ENCODE measurements at regions of chr16 and their contacts with region 1.

Region 1: GRCh38 chr16:57091975-57092785 is at the start of gene CPNE2:
- DNase-seq: peak; percentile 88
- H3K4me3 ChIP-seq: peak within 1 kb of the TSS; percentile 71 to 93 (median 85)
- H3K27ac ChIP-seq: peak within 1 kb of the TSS; percentile 80 to 86 (median 82)
- H3K4me1 ChIP-seq: peaks cover 0 to 28% (median 23%) of the 10 kb centered on the region in 4 donors
- H3K27me3 ChIP-seq: no peaks in the 10 kb centered on the region
- CTCF ChIP-seq: no peak
- EP300 ChIP-seq: no peak
- POLR2A ChIP-seq: no peak
- total RNA-seq, gene CPNE2: 22.9 to 59.9 (median 25.4) TPM

Region 2: GRCh38 chr16:57000271-57001025 is 91.7 kb before region 1 on chr16:
- intact Hi-C with region 1: no loop called
- DNase-seq: peak; percentile 14
- H3K4me3 ChIP-seq: no peak overlapping the region
- H3K27ac ChIP-seq: peak overlapping the region in 3 of 4 donors; percentile 16 to 66 (median 51)
- H3K4me1 ChIP-seq: peaks cover 0 to 14% (median 6%) of the 10 kb centered on the region in 4 donors
- H3K27me3 ChIP-seq: no peaks in the 10 kb centered on the region
- CTCF ChIP-seq: no peak
- EP300 ChIP-seq: no peak
- POLR2A ChIP-seq: no peak

Region 3: DNA sequence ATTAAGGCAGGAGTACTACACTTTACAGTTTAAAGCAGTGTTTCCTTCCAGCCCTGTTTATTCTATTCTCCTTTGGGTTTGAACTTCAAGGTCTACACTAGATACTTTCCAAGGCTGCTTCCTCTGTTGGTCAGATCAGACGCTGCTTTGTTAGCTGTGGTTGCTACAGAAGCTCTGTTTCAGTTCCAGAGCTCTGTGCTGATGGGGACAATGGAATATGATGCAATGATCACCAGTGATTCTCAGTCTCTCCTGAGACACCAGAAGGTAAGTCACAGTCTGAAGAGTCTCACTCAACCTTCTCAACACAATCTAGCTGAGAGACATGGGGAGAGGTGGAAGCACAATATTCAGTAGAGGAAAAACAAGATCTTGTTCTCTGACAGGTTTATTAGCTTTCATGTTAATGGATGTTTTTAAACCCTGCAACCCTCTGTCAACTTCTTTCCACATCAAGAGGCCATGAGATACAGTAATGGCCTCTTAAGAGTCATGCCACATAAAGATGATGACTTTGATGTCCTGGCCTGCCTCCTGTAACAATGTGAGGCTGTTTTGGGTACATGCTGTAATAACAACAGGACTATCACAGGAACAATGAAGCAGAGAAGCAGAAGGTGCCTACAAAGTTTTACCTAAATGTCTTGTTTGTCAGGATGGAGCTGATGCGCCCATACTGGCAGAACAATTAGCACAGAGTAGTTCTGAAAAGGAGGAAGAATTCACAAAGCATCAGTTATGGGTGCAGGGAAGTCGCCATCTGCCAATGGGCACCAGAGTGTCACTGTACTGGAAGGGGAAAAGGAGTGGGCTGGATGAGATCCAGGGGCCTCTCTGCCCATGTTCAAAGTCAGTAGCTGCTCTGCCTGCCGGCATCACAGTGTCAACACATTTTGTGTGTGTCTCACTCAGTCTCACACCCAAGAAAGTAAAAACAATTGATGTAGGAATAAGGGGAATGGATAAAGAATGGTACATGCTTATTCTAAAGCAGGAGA is 60.2 kb after region 1 on chr16:
- intact Hi-C with region 1: loop called (anchors 5 kb)
- DNase-seq: peak; percentile 41
- H3K4me3 ChIP-seq: no peak overlapping the region
- H3K27ac ChIP-seq: peak overlapping the region in 1 of 4 donors; percentile 54
- H3K4me1 ChIP-seq: peaks cover 0 to 26% (median 20%) of the 10 kb centered on the region in 4 donors
- H3K27me3 ChIP-seq: no peaks in the 10 kb centered on the region
- CTCF ChIP-seq: no peak
- EP300 ChIP-seq: no peak
- POLR2A ChIP-seq: no peak

Region 4: DNA sequence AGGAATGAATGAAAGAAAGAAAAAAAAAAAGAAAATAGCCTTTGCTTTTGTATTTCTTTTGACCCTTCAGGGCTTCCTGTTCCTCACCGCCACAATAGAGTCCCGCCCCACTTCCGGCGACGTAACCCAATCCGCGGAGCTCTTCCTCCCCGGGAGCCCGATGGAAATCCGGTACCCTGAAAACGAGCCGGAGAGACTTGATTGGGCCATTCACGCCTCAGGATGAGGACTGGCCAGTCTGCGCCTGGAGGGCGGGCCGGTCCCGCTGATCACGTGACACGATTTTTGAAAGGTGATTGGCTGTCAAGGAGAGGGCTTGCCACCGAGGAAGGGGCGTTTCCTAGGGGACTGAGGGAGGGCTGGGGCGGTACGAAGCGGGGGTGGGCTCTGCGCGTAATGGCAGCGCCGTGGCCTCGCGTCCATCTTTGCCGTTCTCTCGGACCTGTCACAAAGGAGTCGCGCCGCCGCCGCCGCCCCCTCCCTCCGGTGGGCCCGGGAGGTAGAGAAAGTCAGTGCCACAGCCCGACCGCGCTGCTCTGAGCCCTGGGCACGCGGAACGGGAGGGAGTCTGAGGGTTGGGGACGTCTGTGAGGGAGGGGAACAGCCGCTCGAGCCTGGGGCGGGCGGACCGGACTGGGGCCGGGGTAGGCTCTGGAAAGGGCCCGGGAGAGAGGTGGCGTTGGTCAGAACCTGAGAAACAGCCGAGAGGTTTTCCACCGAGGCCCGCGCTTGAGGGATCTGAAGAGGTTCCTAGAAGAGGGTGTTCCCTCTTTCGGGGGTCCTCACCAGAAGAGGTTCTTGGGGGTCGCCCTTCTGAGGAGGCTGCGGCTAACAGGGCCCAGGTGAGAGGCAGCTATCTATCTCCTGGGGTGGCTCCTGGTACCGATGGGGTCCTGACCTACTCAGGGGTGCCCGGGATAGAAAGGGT is 94.0 kb after region 1 on chr16 and contains the starts of genes PSME3IP1 and RSPRY1:
- intact Hi-C with region 1: loop called (anchors 5 kb)
- DNase-seq: peak; percentile 99
- H3K4me3 ChIP-seq: peak within 1 kb of the TSS; percentile 88 to 99 (median 96)
- H3K27ac ChIP-seq: peak within 1 kb of the TSS; percentile 97 to 99 (median 98)
- H3K4me1 ChIP-seq: peaks cover 0 to 57% (median 42%) of the 10 kb centered on the region in 4 donors
- H3K27me3 ChIP-seq: no peaks in the 10 kb centered on the region
- CTCF ChIP-seq: no peak
- EP300 ChIP-seq: no peak
- POLR2A ChIP-seq: peak; percentile 81 to 83
- total RNA-seq, gene PSME3IP1: 60.1 to 81.3 (median 76.9) TPM
- total RNA-seq, gene RSPRY1: 30.6 to 42.7 (median 34.1) TPM

Region 5: DNA sequence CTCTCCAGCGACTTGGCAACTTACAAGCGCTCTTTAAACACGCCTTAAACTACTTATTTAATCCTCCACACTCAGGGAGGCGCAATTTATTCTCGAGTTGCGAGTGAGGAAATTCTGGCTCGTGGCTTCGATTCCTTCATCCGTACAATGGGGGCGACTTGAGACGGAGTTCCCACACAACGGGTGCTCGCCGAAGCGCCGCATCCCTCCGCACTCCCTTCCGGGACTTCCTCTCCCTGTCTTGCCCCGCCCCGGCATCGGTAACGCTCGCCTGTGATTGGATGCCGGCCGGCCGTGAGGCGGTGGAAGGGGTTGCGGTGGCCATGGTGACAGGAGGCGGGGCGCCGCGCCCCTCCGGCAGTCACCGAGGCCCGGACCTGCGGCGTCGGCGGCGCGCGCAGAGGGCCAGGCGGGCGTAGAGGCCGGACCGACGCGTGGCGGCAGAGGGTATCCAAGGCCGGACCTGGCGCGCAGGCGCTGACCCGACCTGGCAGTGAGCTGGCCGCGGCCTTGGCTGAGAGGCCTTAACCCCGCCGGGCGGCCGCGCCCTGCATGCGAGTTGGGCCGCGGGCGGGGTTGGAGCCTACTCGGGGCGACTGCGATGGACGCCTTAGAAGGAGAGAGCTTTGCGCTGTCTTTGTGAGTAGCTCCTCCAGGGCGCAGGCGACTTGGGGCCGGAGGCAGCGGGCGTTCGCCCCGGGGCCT is 152.7 kb after region 1 on chr16 and contains the start of gene ARL2BP:
- intact Hi-C with region 1: loop called (anchors 5 kb)
- DNase-seq: peak; percentile 99
- H3K4me3 ChIP-seq: peak within 1 kb of the TSS; percentile 62 to 90 (median 86)
- H3K27ac ChIP-seq: peak within 1 kb of the TSS; percentile 93 to 96 (median 94)
- H3K4me1 ChIP-seq: peaks cover 0 to 14% (median 8%) of the 10 kb centered on the region in 4 donors
- H3K27me3 ChIP-seq: no peaks in the 10 kb centered on the region
- CTCF ChIP-seq: no peak
- EP300 ChIP-seq: no peak
- POLR2A ChIP-seq: peak; percentile 33 to 89
- total RNA-seq, gene ARL2BP: 64.7 to 85.6 (median 74.4) TPM

Measured in sigmoid colon (tissue), 7 donors.